ENCODE measurements at regions of chr17 and their contacts with region 1.

Region 1: DNA sequence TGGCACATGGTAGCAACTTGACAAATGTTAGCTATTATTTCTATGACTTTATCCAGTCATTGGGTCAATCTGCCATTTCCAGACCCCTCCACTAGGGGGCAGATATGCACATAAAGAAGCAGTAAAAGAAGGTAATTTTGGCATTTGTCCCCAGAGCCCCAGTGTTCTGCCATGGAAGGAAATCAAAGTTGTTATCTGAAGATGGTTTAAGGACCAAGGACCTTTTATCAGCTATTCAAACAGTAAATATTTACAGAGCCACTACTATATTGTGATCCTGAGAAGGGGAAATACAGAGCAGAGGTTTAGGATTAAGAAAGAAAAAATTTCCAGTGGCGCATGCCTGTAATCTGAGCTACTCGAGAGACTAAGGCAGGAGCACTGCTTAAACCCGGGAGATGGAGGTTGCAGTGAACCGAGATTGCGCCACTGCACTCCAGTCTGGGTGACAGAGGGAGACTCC is 20.0 kb downstream of the TRAF4 start:
- DNase-seq: peak; percentile 61 to 85 (median 76)
- ATAC-seq: peak; percentile 89
- H3K4me3 ChIP-seq: no peak overlapping the region
- H3K4me3 Mint-ChIP-seq: no peak overlapping the region
- H3K27ac ChIP-seq: no peak overlapping the region
- H3K27ac Mint-ChIP-seq: peak overlapping the region; percentile 7
- H3K4me1 ChIP-seq: no peaks in the 10 kb centered on the region
- H3K4me1 Mint-ChIP-seq: peaks cover 8% of the 10 kb centered on the region
- H3K27me3 ChIP-seq: no peaks in the 10 kb centered on the region
- H3K27me3 Mint-ChIP-seq: no peaks in the 10 kb centered on the region
- CTCF ChIP-seq: peak; percentile 97

Region 2: DNA sequence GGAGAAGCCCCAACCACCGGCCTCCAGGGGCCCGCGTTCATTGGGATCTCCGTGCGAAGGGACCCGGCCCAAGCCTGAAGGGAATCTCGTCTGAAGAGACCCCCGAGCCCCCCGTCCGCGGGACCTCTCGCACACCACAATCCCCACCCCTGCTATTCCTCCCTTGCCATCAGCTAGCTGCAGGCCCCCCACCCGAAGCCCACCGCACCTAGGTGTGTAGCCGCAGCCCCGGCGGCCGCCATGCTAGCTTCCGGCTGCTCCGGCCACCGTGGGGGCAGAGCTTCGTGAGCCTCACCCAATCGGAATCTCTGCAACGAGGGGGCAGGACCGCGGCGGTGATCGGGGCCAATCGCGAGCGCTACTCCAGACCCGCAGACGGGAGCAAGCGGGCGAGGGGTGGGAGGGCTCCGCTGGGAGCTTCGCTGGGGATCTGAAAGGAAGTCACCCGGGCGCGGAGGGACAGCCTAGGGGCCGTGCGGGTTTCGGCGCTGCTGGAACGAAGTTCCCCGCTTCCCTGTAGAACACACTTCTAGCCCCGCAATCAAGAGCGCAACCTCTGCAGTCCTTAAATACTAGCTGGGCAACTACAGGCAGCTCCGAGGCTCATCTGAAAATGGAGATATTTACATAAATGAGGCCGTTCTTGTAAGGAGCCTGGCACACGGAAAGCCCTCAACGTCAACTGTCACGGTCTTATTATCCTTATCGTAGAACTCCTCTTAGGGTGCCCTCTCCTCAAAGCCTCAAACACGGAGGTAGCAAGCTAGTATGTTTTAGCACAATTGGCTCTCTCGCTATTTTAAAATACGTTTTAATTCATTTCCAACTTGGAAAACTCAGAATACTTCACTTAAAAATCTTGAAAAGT is 192.3 kb before region 1 on chr17 and contains the start of gene PIGS:
- CTCF ChIA-PET with region 1: no interaction called
- POLR2A ChIA-PET with region 1: no interaction called
- intact Hi-C with region 1: no loop called
- DNase-seq: peak; percentile 78 to 95 (median 88)
- ATAC-seq: peak; percentile 96
- H3K4me3 ChIP-seq: peak within 1 kb of the TSS; percentile 95
- H3K4me3 Mint-ChIP-seq: peak within 1 kb of the TSS; percentile 94
- H3K27ac ChIP-seq: peak within 1 kb of the TSS; percentile 66 to 85
- H3K27ac Mint-ChIP-seq: peak within 1 kb of the TSS; percentile 91
- H3K4me1 ChIP-seq: peaks cover 55% of the 10 kb centered on the region
- H3K4me1 Mint-ChIP-seq: peaks cover 65% of the 10 kb centered on the region
- H3K27me3 ChIP-seq: no peaks in the 10 kb centered on the region
- H3K27me3 Mint-ChIP-seq: no peaks in the 10 kb centered on the region
- CTCF ChIP-seq: no peak
- total RNA-seq, gene PIGS: 73.8 to 76.4 TPM

Region 3: GRCh38 chr17:28667870-28668269 is 96.0 kb before region 1 on chr17:
- CTCF ChIA-PET with region 1: no interaction called
- POLR2A ChIA-PET with region 1: no interaction called
- intact Hi-C with region 1: no loop called
- DNase-seq: no peak
- ATAC-seq: no peak
- H3K4me3 ChIP-seq: no peak overlapping the region
- H3K4me3 Mint-ChIP-seq: no peak overlapping the region
- H3K27ac ChIP-seq: no peak overlapping the region
- H3K27ac Mint-ChIP-seq: peak overlapping the region; percentile 42
- H3K4me1 ChIP-seq: peaks cover 28% of the 10 kb centered on the region
- H3K4me1 Mint-ChIP-seq: peaks cover 54% of the 10 kb centered on the region
- H3K27me3 ChIP-seq: no peaks in the 10 kb centered on the region
- H3K27me3 Mint-ChIP-seq: no peaks in the 10 kb centered on the region
- CTCF ChIP-seq: no peak

Region 4: DNA sequence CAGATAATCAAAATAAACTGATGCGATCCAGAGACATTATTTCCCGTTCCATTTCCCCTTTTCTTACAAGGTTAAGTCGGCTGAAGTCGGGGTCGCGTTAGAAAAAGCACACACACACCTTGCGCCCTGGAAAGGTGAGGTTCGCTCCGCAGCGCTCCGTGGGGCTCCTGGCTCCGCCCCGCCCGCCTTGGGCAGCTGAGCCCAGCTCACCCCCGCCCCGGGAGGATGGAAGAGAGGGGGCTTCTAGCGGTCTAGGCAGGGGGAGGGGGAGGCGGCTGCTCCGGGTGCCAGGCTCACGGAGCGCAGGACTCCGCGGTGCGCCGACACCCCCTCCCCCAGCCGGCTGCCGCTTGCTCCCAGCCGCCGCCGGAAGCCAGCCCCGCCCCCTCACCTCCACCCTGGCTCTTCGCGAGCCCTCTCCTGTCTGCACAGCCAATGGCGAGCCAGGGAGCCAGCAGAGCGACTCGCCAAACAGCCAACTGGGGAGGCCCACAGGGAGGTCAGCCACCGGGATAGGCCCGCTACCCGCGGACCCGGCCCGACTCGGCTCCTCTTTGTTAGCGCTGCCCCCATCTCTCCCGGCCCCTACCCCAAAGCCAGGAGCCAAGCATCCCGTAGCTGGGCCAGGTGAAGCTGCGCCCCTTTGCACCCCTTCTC is 48.4 kb after region 1 on chr17:
- CTCF ChIA-PET with region 1: interaction called, 24 read pairs
- POLR2A ChIA-PET with region 1: interaction called, 10 read pairs
- intact Hi-C with region 1: loop called (anchors 1 to 5 kb)
- DNase-seq: peak; percentile 91 to 98 (median 95)
- ATAC-seq: peak; percentile 95
- H3K4me3 ChIP-seq: peak overlapping the region; percentile 78
- H3K4me3 Mint-ChIP-seq: peak overlapping the region; percentile 92
- H3K27ac ChIP-seq: peak overlapping the region; percentile 91 to 93
- H3K27ac Mint-ChIP-seq: peak overlapping the region; percentile 90
- H3K4me1 ChIP-seq: peaks cover 15% of the 10 kb centered on the region
- H3K4me1 Mint-ChIP-seq: peaks cover 49% of the 10 kb centered on the region
- H3K27me3 ChIP-seq: no peaks in the 10 kb centered on the region
- H3K27me3 Mint-ChIP-seq: no peaks in the 10 kb centered on the region
- CTCF ChIP-seq: no peak

Region 5: DNA sequence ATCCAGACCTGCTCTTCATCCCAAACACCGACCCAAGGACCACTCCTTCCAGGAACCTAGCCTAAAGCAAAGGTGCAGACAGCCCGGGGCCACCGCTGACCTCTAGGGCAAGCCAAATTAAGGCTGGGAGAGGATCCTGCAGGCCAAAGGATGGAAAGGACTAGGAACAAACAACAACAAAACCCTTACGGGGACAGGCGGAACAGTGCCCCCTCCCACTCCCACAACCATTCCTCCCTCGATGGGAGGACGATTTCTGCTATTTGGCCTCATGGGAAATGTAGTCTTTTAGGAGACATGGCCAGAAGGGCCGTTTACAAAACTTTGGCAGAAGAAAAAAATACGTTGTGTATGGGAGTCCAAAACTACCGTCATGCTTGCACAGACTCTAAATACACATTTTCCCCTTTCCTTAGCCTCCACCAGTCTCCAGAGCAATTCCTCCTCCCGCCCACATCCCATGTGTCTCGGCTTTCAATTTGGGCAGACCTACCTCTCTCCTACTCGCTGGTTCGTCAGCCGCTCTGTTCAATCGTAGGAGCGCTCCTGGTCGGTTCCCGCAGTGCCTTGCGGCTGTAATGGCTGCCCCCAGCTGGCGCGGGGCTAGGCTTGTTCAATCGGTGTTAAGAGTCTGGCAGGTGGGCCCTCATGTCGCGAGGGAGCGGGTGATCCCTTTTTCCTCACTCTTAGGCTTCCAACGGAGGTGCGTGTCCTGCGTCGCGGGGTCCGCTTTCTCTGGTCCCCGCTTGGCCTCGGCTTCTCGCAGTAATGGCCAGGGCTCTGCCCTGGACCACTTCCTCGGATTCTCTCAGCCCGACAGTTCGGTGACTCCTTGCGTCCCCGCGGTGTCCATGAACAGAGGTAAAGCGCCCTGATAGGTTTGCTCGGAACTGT is 90.9 kb after region 1 on chr17 and contains the start of gene ERAL1:
- CTCF ChIA-PET with region 1: interaction called, 10 read pairs
- POLR2A ChIA-PET with region 1: no interaction called
- intact Hi-C with region 1: no loop called
- DNase-seq: peak; percentile 69 to 90 (median 76)
- ATAC-seq: peak; percentile 100
- H3K4me3 ChIP-seq: peak within 1 kb of the TSS; percentile 96
- H3K4me3 Mint-ChIP-seq: peak within 1 kb of the TSS; percentile 91
- H3K27ac ChIP-seq: peak within 1 kb of the TSS; percentile 70 to 72
- H3K27ac Mint-ChIP-seq: peak within 1 kb of the TSS; percentile 78
- H3K4me1 ChIP-seq: peaks cover 15% of the 10 kb centered on the region
- H3K4me1 Mint-ChIP-seq: peaks cover 18% of the 10 kb centered on the region
- H3K27me3 ChIP-seq: no peaks in the 10 kb centered on the region
- H3K27me3 Mint-ChIP-seq: no peaks in the 10 kb centered on the region
- CTCF ChIP-seq: no peak
- total RNA-seq, gene ERAL1: 15.6 to 16.8 TPM

Region 6: DNA sequence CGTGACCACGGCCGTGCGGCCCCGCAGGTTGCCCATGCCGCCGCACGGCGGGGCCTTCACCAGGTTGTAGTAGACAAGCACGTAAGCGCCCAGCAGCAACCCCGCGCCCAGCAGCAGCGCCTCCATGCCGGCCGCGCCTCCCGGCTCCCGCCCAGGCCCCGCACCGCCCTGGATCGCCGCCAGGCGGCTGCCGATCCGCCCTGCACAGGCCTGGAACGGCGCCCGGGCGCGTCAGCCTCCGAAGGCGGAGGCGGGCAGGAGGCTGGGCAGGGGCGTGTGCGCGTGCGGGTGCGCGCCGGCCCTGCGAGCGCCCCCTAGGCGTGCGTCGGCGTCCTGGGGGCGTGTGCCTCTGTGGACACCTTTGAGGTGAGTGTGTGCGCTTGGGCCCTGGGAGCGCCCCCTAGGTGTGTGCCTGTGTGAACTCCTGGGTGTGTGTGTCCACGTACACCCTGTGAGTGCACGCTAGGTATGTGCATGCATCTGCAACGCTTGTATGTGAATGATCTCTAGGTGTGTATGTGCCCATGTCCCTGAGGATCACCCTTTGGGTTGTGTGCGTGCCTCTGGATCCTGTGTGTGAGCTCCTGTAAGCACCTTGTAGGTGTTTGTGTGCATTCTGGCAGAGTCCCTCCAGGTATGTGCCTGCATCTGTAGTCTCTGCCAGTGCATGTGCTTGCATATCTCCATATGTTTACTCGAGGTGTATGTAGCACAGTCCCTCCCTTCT is 139.1 kb after region 1 on chr17 and contains the start of gene DHRS13:
- CTCF ChIA-PET with region 1: interaction called, 19 read pairs
- POLR2A ChIA-PET with region 1: interaction called, 10 read pairs
- intact Hi-C with region 1: loop called in 1 of 2 experiments (anchors 5 kb)
- DNase-seq: peak; percentile 88 to 99 (median 95)
- ATAC-seq: peak; percentile 88
- H3K4me3 ChIP-seq: peak within 1 kb of the TSS; percentile 79
- H3K4me3 Mint-ChIP-seq: peak within 1 kb of the TSS; percentile 85
- H3K27ac ChIP-seq: peak within 1 kb of the TSS; percentile 71 to 76
- H3K27ac Mint-ChIP-seq: peak within 1 kb of the TSS; percentile 85
- H3K4me1 ChIP-seq: peaks cover 36% of the 10 kb centered on the region
- H3K4me1 Mint-ChIP-seq: peaks cover 35% of the 10 kb centered on the region
- H3K27me3 ChIP-seq: no peaks in the 10 kb centered on the region
- H3K27me3 Mint-ChIP-seq: no peaks in the 10 kb centered on the region
- CTCF ChIP-seq: peak; percentile 93
- total RNA-seq, gene DHRS13: 33.5 to 34.3 TPM

Region 7: GRCh38 chr17:29111816-29112499 is 348.1 kb after region 1 on chr17:
- CTCF ChIA-PET with region 1: interaction called, 5 read pairs
- POLR2A ChIA-PET with region 1: no interaction called
- intact Hi-C with region 1: loop called (anchors 10 kb)
- DNase-seq: peak; percentile 37 to 76 (median 62)
- ATAC-seq: peak; percentile 85
- H3K4me3 ChIP-seq: no peak overlapping the region
- H3K4me3 Mint-ChIP-seq: no peak overlapping the region
- H3K27ac ChIP-seq: no peak overlapping the region
- H3K27ac Mint-ChIP-seq: no peak overlapping the region
- H3K4me1 ChIP-seq: peaks cover 4% of the 10 kb centered on the region
- H3K4me1 Mint-ChIP-seq: peaks cover 5% of the 10 kb centered on the region
- H3K27me3 ChIP-seq: no peaks in the 10 kb centered on the region
- H3K27me3 Mint-ChIP-seq: no peaks in the 10 kb centered on the region
- CTCF ChIP-seq: peak; percentile 63

Measured in CD4-positive, alpha-beta T cell (primary cell).